ENCODE measurements at regions of chr2 and their contacts with region 1.

Region 1: GRCh38 chr2:160087854-160088745 is 25.7 kb upstream of the PLA2R1 start:
- DNase-seq: peak; percentile 34 to 44
- H3K4me3 ChIP-seq: no peak overlapping the region
- H3K4me1 ChIP-seq: no peaks in the 10 kb centered on the region
- H3K27me3 ChIP-seq: no peaks in the 10 kb centered on the region

Region 2: DNA sequence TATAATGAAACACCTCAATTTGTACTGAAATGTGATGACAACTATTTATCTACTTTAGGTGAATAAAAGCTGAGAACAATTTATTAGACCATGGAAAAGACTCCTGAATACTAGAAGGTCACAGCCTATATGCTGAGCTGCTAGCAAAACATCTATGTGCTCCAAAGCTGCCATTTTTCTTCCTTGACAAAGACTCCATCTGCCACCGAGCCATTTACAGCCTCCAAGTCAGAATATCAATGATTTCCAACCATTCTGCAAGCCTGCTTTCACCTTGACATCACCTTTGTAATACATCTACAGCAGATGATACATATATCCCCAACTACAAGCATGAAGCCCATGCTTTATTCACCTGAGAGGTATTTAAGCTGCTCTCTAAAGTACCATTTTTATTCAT is 556.6 kb before region 1 on chr2:
- in situ Hi-C with region 1: no loop called
- DNase-seq: no peak
- H3K4me3 ChIP-seq: no peak overlapping the region
- H3K4me1 ChIP-seq: no peaks in the 10 kb centered on the region
- H3K27me3 ChIP-seq: no peaks in the 10 kb centered on the region

Region 3: DNA sequence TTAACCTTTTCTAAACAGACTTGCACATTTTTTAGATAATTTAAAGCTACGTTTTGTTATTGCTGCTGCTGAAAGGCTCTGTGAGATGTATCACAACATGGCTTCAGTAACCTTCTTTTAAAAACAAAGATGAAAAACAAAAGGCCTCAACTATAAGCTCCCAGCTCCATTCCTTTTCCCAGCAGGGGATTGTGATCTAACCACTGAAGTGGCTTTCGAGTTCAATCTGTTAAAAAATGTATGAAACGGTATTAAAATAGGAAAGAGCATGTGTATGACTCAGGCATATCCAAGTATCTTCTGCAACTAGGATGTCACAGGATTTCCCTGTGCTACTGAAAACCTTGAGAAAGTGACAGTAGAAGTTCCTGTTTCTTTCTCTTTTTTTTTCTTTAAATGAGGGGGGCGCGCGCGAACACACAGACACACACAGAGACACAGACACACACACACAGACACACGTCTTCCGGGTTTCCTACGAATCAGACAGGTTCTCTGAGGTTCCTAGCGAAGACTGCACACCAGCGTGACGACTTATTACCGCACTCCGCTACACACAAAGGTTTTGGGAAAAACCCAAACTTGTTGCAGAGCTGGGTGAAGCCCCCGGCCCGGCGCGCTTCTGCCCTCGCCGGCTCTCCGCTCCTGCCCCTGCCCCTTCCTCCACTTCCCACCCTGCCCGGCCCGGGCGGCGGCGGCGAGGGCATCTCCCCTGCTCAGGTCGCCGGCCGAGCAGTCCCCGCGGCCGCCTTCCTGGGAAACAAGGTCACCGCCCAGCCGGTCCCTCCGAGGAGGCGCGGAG is 318.7 kb after region 1 on chr2:
- in situ Hi-C with region 1: no loop called
- DNase-seq: peak; percentile 44 to 54
- H3K4me3 ChIP-seq: peak overlapping the region; percentile 58
- H3K4me1 ChIP-seq: peaks cover 48% of the 10 kb centered on the region
- H3K27me3 ChIP-seq: no peaks in the 10 kb centered on the region

Region 4: GRCh38 chr2:160994141-160995002 is 906.3 kb after region 1 on chr2:
- in situ Hi-C with region 1: loop called (anchors 25 kb)
- DNase-seq: peak; percentile 69 to 82
- H3K4me3 ChIP-seq: no peak overlapping the region
- H3K4me1 ChIP-seq: peaks cover 2% of the 10 kb centered on the region; the same call in 1 of the 2 replicates
- H3K27me3 ChIP-seq: no peaks in the 10 kb centered on the region

Measured in HAP-1 (cell line).